ENCODE measurements at regions of chr16 and their contacts with region 1.

Region 1: DNA sequence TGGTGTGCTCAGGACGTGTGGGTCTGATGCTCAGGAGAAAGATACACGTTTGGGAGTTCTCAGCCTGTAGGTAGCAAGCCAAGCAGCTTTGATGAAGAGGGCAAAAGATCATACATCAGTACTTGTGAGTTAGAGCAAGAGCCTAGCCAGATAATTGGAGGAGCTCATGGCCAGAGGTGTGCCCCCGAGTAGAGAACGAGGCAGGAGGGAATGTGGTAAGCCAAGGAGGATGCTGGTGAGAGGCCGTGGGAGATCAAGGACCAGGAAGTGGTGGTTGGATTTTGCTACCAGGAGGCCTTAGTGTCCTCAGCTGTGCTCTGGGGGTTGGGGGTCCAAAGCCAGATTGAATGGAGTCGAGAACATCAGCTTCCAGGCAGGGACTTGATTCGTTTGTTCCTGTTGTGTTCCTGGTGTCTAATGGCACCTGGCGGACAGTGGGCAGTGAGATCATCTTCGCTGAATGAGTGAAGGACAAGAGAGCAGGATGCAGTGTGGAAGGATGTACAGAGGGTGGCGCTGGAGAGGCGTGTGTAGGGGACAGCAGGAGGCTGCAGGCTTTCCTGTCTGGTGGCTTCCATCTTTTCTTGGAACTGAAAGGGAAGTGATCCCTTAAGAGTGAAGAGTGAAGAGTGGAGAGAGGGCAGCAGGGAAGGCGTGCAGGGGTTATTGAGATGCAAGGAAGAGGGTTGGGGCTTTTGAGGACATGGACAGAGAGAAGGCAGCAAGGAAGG is 11.6 kb downstream of the FBXL19 start:
- DNase-seq: peak; percentile 66
- H3K4me3 Mint-ChIP-seq: no peak overlapping the region
- H3K27ac Mint-ChIP-seq: no peak overlapping the region
- H3K4me1 Mint-ChIP-seq: peaks cover 25% of the 10 kb centered on the region
- H3K27me3 Mint-ChIP-seq: no peaks in the 10 kb centered on the region

Region 2: GRCh38 chr16:30956601-30957455 is 21.8 kb after region 1 on chr16:
- CTCF ChIA-PET with region 1: interaction called, 31 read pairs
- DNase-seq: peak; percentile 90
- H3K4me3 Mint-ChIP-seq: peak overlapping the region; percentile 85
- H3K27ac Mint-ChIP-seq: peak overlapping the region; percentile 98
- H3K4me1 Mint-ChIP-seq: peaks cover 44% of the 10 kb centered on the region
- H3K27me3 Mint-ChIP-seq: no peaks in the 10 kb centered on the region